H1 (cell line): ENCODE measurements at regions of chr1 and their contacts with region 1.

Region 1: GRCh38 chr1:229410692-229411443 is 23.0 kb downstream of the ACTA1 start:
- DNase-seq: no peak
- H3K4me3 ChIP-seq: peak overlapping the region in 2 of 4 experiments; percentile 10 to 18; a peak in 1 of 8 replicates
- H3K27ac ChIP-seq: no peak overlapping the region
- H3K4me1 ChIP-seq: peaks cover 19 to 42% (median 29%) of the 10 kb centered on the region in 4 experiments
- H3K27me3 ChIP-seq: peaks cover 13 to 42% (median 39%) of the 10 kb centered on the region in 4 experiments
- CTCF ChIP-seq: no peak
- EP300 ChIP-seq: no peak
- POLR2A ChIP-seq: no peak
- RAD21 ChIP-seq: no peak

Region 2: DNA sequence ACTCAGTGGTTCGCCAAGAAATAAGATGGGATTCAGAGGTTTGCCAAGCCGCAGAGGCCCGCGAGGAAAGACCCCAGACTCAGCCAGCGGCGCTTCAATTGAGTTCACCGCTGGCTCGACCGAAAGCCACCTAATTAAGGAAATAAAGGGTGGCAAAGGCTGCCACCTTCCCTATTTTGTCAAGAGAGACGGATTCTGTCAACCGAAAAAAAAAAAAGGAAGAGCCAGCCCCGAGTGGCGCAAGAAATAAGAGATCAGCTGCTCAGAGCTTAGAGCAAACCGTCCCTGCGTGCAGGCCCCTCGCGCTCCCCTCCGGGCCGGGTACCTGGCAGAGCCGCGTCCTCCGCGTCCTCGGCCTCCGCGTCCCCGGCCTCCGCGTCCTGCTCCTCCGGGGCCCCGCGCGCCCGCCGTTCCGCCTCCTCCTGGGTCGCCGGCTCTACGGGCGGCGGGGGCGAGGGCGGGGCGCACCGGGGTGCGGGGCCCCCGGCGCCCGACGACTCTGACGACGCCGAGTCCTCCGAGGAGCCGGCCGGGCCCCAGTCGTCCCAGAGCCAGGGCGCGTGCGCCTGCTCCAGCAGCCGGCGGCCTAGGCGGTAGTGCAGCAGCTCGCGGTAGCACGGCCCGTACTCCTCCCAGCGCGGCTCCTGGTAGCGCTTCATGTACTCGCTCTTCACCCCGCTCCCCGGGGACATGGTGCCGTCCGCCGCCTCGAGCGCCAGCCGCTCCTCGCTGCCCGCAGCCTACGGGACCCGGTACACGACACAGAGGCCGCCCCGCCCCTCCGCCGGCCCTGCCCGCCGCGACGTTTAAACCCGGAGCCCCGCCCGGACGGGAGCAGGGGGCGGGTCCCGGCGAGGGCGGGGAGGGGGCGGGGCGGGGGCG is 68.9 kb before region 1 on chr1:
- CTCF ChIA-PET with region 1: interaction called, 5 read pairs
- POLR2A ChIA-PET with region 1: interaction called, 11 read pairs
- DNase-seq: peak in 1 of 2 experiments; percentile 88
- H3K4me3 ChIP-seq: peak overlapping the region; percentile 58 to 82 (median 79)
- H3K27ac ChIP-seq: no peak overlapping the region
- H3K4me1 ChIP-seq: peaks cover 0 to 6% (median 5%) of the 10 kb centered on the region in 4 experiments; a peak in 6 of 7 replicates
- H3K27me3 ChIP-seq: peaks cover 2 to 13% (median 9%) of the 10 kb centered on the region in 4 experiments; a peak in 5 of 7 replicates
- CTCF ChIP-seq: no peak
- EP300 ChIP-seq: no peak
- POLR2A ChIP-seq: no peak
- RAD21 ChIP-seq: no peak

Region 3: GRCh38 chr1:229396595-229397206 is 14.2 kb before region 1 on chr1:
- CTCF ChIA-PET with region 1: interaction called, 11 read pairs
- POLR2A ChIA-PET with region 1: interaction called, 3 read pairs
- DNase-seq: no peak
- H3K4me3 ChIP-seq: no peak overlapping the region
- H3K27ac ChIP-seq: no peak overlapping the region
- H3K4me1 ChIP-seq: peaks cover 0 to 7% (median 5%) of the 10 kb centered on the region in 4 experiments; a peak in 5 of 7 replicates
- H3K27me3 ChIP-seq: peaks cover 0 to 3% (median 1%) of the 10 kb centered on the region in 4 experiments; a peak in 2 of 7 replicates
- CTCF ChIP-seq: no peak
- EP300 ChIP-seq: no peak
- POLR2A ChIP-seq: no peak
- RAD21 ChIP-seq: no peak

Region 4: GRCh38 chr1:229430761-229431283 is 20.0 kb after region 1 on chr1:
- CTCF ChIA-PET with region 1: interaction called, 47 read pairs
- POLR2A ChIA-PET with region 1: interaction called, 48 read pairs
- DNase-seq: peak; percentile 53 to 95
- H3K4me3 ChIP-seq: peak overlapping the region in 3 of 4 experiments; percentile 15 to 43 (median 23); a peak in 4 of 8 replicates
- H3K27ac ChIP-seq: no peak overlapping the region
- H3K4me1 ChIP-seq: peaks cover 0 to 18% (median 10%) of the 10 kb centered on the region in 4 experiments; a peak in 6 of 7 replicates
- H3K27me3 ChIP-seq: peaks cover 35 to 60% (median 56%) of the 10 kb centered on the region in 4 experiments
- CTCF ChIP-seq: peak; percentile 0 to 25 (median 2); a peak in 3 of 4 replicates
- EP300 ChIP-seq: no peak
- POLR2A ChIP-seq: no peak
- RAD21 ChIP-seq: peak; percentile 29 to 53; a peak in 3 of 4 replicates